ENCODE measurements at regions of chr2 and their contacts with region 1.

Region 1: GRCh38 chr2:189580658-189581353 is at the start of gene SLC40A1:
- DNase-seq: peak; percentile 89 to 96
- H3K4me3 ChIP-seq: peak within 1 kb of the TSS; percentile 66
- H3K4me3 Mint-ChIP-seq: peak within 1 kb of the TSS; percentile 99
- H3K27ac Mint-ChIP-seq: peak within 1 kb of the TSS; percentile 88
- H3K4me1 ChIP-seq: peaks cover 51% of the 10 kb centered on the region
- H3K4me1 Mint-ChIP-seq: peaks cover 48% of the 10 kb centered on the region
- H3K27me3 ChIP-seq: no peaks in the 10 kb centered on the region
- H3K27me3 Mint-ChIP-seq: no peaks in the 10 kb centered on the region
- CTCF ChIP-seq: no peak
- total RNA-seq, gene SLC40A1: 78.1 and 109 TPM in 2 replicates

Region 2: GRCh38 chr2:189466660-189467059 is 114.1 kb before region 1 on chr2:
- CTCF ChIA-PET with region 1: no interaction called
- POLR2A ChIA-PET with region 1: no interaction called
- intact Hi-C with region 1: loop called (anchors 1 kb)
- DNase-seq: peak in 1 of 2 experiments; percentile 51
- H3K4me3 ChIP-seq: no peak overlapping the region
- H3K4me3 Mint-ChIP-seq: no peak overlapping the region
- H3K27ac Mint-ChIP-seq: no peak overlapping the region
- H3K4me1 ChIP-seq: no peaks in the 10 kb centered on the region
- H3K4me1 Mint-ChIP-seq: no peaks in the 10 kb centered on the region
- H3K27me3 ChIP-seq: no peaks in the 10 kb centered on the region
- H3K27me3 Mint-ChIP-seq: no peaks in the 10 kb centered on the region
- CTCF ChIP-seq: peak; percentile 89 to 90

Region 3: DNA sequence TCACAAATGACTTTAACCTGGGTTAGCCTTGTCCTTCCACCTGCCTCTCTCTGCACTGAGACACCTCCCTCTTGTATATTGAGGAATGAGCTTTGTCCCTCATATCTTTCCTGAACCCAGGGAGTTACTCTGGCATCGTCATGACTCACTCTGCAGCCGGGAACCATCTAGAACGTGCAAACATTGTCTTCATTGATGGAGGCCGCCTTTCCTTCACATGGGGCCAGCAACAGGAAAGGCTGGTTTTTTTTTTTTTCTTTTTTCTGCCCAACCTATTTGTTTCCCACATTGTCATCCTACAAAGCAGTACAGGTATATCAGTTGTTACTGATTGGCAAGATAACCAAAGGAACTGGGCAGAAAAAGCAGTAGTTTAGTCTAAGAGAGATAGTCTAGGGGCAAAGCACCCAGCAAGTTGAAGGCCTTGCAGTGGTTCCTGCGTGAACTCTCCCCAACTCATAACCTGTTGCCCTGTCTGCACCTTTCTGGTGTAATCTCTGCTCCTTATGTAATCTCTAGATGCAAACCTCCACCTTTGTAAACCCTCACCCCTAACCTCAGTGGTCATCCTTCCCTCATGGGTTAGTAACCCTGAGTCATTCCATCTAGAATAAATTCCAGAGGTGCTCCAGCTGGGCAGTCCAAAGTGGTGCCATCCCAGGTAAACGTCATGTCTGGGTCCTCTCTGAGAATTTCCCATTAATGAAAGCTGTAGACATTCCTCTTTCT is 38.5 kb before region 1 on chr2:
- CTCF ChIA-PET with region 1: interaction called, 3 read pairs
- POLR2A ChIA-PET with region 1: interaction called, 3 read pairs
- intact Hi-C with region 1: loop called (anchors 1 kb)
- DNase-seq: peak; percentile 86 to 92
- H3K4me3 ChIP-seq: no peak overlapping the region
- H3K4me3 Mint-ChIP-seq: peak overlapping the region; percentile 27
- H3K27ac Mint-ChIP-seq: peak overlapping the region; percentile 71
- H3K4me1 ChIP-seq: peaks cover 36% of the 10 kb centered on the region
- H3K4me1 Mint-ChIP-seq: peaks cover 37% of the 10 kb centered on the region
- H3K27me3 ChIP-seq: no peaks in the 10 kb centered on the region
- H3K27me3 Mint-ChIP-seq: no peaks in the 10 kb centered on the region
- CTCF ChIP-seq: no peak

Region 4: GRCh38 chr2:189569295-189569910 is 11.4 kb before region 1 on chr2:
- CTCF ChIA-PET with region 1: no interaction called
- POLR2A ChIA-PET with region 1: no interaction called
- intact Hi-C with region 1: no loop called
- DNase-seq: no peak
- H3K4me3 ChIP-seq: no peak overlapping the region
- H3K4me3 Mint-ChIP-seq: no peak overlapping the region
- H3K27ac Mint-ChIP-seq: no peak overlapping the region
- H3K4me1 ChIP-seq: peaks cover 6% of the 10 kb centered on the region
- H3K4me1 Mint-ChIP-seq: peaks cover 8% of the 10 kb centered on the region
- H3K27me3 ChIP-seq: no peaks in the 10 kb centered on the region
- H3K27me3 Mint-ChIP-seq: no peaks in the 10 kb centered on the region
- CTCF ChIP-seq: no peak

Region 5: GRCh38 chr2:189599245-189599644 is 18.4 kb after region 1 on chr2:
- CTCF ChIA-PET with region 1: interaction called, 15 read pairs
- POLR2A ChIA-PET with region 1: interaction called, 24 read pairs
- intact Hi-C with region 1: loop called (anchors 1 kb)
- DNase-seq: peak; percentile 76 to 81
- H3K4me3 ChIP-seq: no peak overlapping the region
- H3K4me3 Mint-ChIP-seq: peak overlapping the region; percentile 5
- H3K27ac Mint-ChIP-seq: peak overlapping the region; percentile 83
- H3K4me1 ChIP-seq: peaks cover 36% of the 10 kb centered on the region
- H3K4me1 Mint-ChIP-seq: peaks cover 22% of the 10 kb centered on the region
- H3K27me3 ChIP-seq: no peaks in the 10 kb centered on the region
- H3K27me3 Mint-ChIP-seq: no peaks in the 10 kb centered on the region
- CTCF ChIP-seq: no peak

Region 6: DNA sequence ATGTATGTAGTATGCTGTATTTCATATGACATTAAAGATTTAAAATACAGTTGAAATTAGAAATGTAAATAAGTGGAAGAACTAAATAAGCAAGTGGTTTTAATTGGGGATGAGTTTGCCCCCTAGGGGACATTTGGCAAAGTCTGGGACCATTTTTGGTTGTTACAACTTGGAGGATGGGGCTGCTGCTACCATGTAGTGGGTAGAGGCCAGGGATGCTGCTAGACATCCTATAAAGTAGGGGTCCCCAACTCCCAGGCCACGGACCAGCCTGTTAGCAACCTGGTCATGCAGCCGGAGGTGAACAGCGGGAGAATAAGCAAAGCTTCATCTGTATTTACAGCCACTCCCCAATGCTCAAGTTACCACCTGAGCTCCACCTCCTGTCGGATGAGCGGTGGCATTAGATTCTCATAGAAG is 52.6 kb after region 1 on chr2:
- CTCF ChIA-PET with region 1: interaction called, 10 read pairs
- POLR2A ChIA-PET with region 1: interaction called, 5 read pairs
- intact Hi-C with region 1: loop called (anchors 1 kb)
- DNase-seq: peak in 1 of 2 experiments; percentile 33
- H3K4me3 ChIP-seq: no peak overlapping the region
- H3K4me3 Mint-ChIP-seq: no peak overlapping the region
- H3K27ac Mint-ChIP-seq: no peak overlapping the region
- H3K4me1 ChIP-seq: peaks cover 19% of the 10 kb centered on the region
- H3K4me1 Mint-ChIP-seq: peaks cover 12% of the 10 kb centered on the region
- H3K27me3 ChIP-seq: no peaks in the 10 kb centered on the region
- H3K27me3 Mint-ChIP-seq: no peaks in the 10 kb centered on the region
- CTCF ChIP-seq: peak; percentile 45 to 54